HEK293 (cell line): ENCODE measurements at regions of chr17 and their contacts with region 1.

Region 1: GRCh38 chr17:7252176-7253043 is at the start of gene ELP5:
- H3K4me3 ChIP-seq: peak within 1 kb of the TSS; percentile 91
- H3K27ac ChIP-seq: peak within 1 kb of the TSS; percentile 92
- H3K4me1 ChIP-seq: peaks cover 13% of the 10 kb centered on the region; the same call in 1 of the 2 replicates
- CTCF ChIP-seq: peak; percentile 99

Region 2: GRCh38 chr17:7219812-7220581 is 32.4 kb before region 1 on chr17 and contains the starts of genes ACADVL and DLG4:
- CTCF ChIA-PET with region 1: no interaction called
- POLR2A ChIA-PET with region 1: interaction called, 13 read pairs
- H3K4me3 ChIP-seq: peak within 1 kb of the TSS; percentile 83
- H3K27ac ChIP-seq: peak within 1 kb of the TSS; percentile 83; the same call in 1 of the 2 replicates
- H3K4me1 ChIP-seq: peaks cover 7% of the 10 kb centered on the region
- CTCF ChIP-seq: no peak

Region 3: DNA sequence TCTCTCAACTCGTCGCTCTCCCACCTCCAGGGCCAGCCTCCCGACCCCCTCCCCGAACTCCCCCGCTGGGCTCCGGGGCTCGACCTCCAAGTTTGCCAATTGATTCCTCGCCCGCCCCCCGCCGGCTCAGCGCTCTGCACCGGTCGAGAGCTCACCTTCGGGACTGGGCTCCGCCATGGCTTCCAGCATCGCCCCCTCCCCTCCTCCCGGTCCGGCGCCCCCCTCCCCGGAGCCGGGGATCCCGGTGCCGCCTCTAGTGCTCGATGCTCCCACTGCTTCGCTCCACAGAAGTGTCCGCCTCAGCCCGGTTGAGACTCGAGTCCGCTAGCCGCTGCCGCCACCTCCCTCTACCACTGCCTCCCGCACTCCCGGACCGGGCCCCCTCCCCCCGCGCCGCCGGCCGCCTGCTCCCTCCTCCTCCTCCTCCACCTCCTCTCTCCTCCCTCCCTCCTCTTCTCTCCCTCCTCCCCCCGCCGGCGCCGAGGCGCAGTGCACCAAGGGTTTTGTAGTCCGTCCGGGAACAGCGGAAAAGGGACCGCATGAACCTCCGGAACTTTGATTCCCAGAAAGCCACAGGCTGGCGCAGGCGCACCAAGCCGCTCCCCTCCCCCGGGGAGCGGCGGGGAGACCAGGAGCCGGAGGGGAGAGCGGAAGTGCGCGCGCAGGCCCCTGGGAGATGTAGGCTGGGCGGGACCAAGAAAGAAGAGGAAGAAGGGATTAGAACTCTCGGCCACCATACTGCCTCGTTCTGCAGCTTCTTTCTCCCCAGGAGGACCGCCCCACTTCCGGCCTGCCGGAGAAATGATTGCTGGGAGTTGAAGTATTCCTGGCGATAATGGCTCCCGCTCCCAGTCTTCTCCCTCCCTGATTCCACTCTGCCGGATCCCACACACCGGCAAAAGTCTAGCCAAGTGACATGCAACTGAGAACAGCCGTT is 13.1 kb before region 1 on chr17 and contains the start of gene PHF23:
- CTCF ChIA-PET with region 1: no interaction called
- POLR2A ChIA-PET with region 1: interaction called, 33 read pairs
- H3K4me3 ChIP-seq: peak within 1 kb of the TSS; percentile 90
- H3K27ac ChIP-seq: peak within 1 kb of the TSS; percentile 89
- H3K4me1 ChIP-seq: peaks cover 13% of the 10 kb centered on the region
- CTCF ChIP-seq: peak; percentile 30; the same call in 1 of the 2 replicates

Region 4: GRCh38 chr17:7263083-7264078 is 11.0 kb after region 1 on chr17:
- CTCF ChIA-PET with region 1: interaction called, 5 read pairs
- POLR2A ChIA-PET with region 1: interaction called, 10 read pairs
- H3K4me3 ChIP-seq: peak overlapping the region; percentile 40
- H3K27ac ChIP-seq: peak overlapping the region; percentile 80
- H3K4me1 ChIP-seq: peaks cover 18% of the 10 kb centered on the region
- CTCF ChIP-seq: no peak

Region 5: GRCh38 chr17:7314719-7315569 is 62.5 kb after region 1 on chr17 and contains the start of gene GPS2:
- CTCF ChIA-PET with region 1: no interaction called
- POLR2A ChIA-PET with region 1: no interaction called
- H3K4me3 ChIP-seq: peak within 1 kb of the TSS; percentile 87
- H3K27ac ChIP-seq: peak within 1 kb of the TSS; percentile 98
- H3K4me1 ChIP-seq: peaks cover 11% of the 10 kb centered on the region
- CTCF ChIP-seq: no peak; the same call in 1 of the 2 replicates